IMR-90 (cell line): ENCODE measurements at regions of chr2 and their contacts with region 1.

Region 1: DNA sequence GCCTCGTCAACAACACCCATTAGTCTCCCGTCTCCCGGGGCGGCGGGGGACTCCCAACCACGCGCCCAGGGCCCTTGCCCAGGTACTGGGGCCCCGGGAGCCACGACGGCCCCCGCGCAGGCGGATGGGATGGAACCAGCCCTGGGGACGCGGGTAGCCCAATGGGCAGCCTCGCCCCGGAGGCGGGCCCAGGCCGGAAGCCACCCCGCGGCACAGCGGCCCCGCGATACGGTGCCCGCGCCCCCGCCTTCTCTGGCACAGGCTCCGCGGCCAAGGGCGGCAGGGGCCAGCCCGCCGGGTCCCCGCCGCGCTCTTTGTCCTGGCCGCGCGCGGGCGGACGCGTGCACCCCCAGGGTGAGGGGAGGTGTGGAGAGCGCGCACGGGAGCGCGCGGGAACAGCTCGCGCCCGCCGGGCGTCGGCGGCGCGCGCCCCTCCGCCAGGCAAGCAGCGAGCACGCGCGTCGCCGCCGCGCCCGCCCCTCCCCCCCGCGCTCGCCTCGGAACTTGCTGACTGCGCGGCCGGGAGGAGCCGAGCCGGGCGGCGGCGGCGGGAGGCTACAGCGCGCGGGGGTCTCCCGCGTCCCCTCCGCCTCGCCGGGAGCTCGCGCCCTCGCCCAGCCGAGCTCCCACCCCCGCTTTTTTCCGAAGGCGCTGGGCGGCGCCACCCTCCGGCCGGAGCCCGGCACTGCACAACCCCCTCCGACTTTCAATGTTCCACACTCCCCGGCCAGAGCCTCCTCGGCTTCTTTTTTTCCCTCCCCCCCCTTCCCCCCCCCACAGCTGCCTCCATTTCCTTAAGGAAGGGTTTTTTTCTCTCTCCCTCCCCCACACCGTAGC is at the start of gene UBE2E3:
- DNase-seq: peak; percentile 72
- ATAC-seq: peak; percentile 82
- H3K4me3 ChIP-seq: peak within 1 kb of the TSS; percentile 96
- H3K27ac ChIP-seq: peak within 1 kb of the TSS; percentile 75
- H3K4me1 ChIP-seq: 0 out of 2 replicates have a peak, but pooled peaks cover 7% of the 10 kb centered on the region
- H3K27me3 ChIP-seq: no peaks in the 10 kb centered on the region
- CTCF ChIP-seq: peak; percentile 77
- POLR2A ChIP-seq: peak; percentile 44
- RAD21 ChIP-seq: peak; percentile 67
- total RNA-seq, gene UBE2E3: 92.8 and 106 TPM in 2 replicates

Region 2: DNA sequence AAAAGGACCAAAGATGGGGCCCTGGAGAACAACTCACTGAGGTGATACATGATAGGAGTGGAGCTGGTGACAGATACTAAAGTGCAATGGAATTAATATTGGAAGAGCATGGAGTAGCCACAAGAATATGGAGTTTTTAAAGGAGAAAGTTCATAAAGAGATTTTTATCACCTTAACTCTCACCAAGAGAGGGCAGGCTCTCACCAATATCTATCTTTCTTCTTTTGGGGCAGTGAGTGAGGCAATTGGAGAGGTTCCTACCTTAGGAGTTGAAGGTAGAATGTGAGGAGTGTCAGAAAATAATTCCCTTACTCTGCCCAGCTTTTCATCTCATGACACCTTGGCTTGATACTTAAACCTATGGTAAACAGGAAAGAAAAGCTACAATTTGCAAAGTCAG is 739.5 kb before region 1 on chr2:
- CTCF ChIA-PET with region 1: interaction called, 5 read pairs
- POLR2A ChIA-PET with region 1: interaction called, 3 read pairs
- dilution Hi-C with region 1: no loop called
- in situ Hi-C with region 1: no loop called
- intact Hi-C with region 1: loop called (anchors 1 kb)
- DNase-seq: peak; percentile 22
- ATAC-seq: peak; percentile 54
- H3K4me3 ChIP-seq: no peak overlapping the region
- H3K27ac ChIP-seq: no peak overlapping the region
- H3K4me1 ChIP-seq: no peaks in the 10 kb centered on the region
- H3K27me3 ChIP-seq: no peaks in the 10 kb centered on the region
- CTCF ChIP-seq: peak; percentile 48
- POLR2A ChIP-seq: no peak
- RAD21 ChIP-seq: peak; percentile 55

Region 3: DNA sequence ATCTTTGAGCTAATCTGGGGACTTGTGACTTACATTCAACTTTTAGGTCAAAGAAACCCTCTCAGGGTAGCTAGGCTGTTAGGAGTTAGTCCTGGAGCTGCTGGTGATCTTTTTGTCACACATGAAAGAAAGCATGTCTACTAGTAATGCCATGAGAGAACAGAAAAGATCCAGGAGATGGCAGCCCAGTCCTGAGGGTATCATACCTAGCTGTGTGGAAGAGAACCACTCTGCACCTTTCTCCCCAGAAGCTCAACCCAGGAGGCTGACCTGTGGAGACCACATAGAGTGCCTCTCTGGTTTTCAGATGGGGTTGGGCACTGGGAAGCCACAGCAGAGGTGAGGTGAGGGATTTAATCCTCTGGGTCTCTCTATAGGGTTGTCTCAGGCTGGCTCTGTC is 460.1 kb before region 1 on chr2:
- CTCF ChIA-PET with region 1: no interaction called
- POLR2A ChIA-PET with region 1: no interaction called
- dilution Hi-C with region 1: no loop called
- in situ Hi-C with region 1: no loop called
- intact Hi-C with region 1: loop called (anchors 2 kb)
- DNase-seq: peak; percentile 18
- ATAC-seq: no peak
- H3K4me3 ChIP-seq: no peak overlapping the region
- H3K27ac ChIP-seq: no peak overlapping the region
- H3K4me1 ChIP-seq: peaks cover 8% of the 10 kb centered on the region
- H3K27me3 ChIP-seq: no peaks in the 10 kb centered on the region
- CTCF ChIP-seq: 0 out of 2 replicates have a peak, but pooled peaks have one; percentile 16
- POLR2A ChIP-seq: no peak
- RAD21 ChIP-seq: peak; percentile 37

Region 4: GRCh38 chr2:180823546-180824141 is 156.7 kb before region 1 on chr2:
- CTCF ChIA-PET with region 1: no interaction called
- POLR2A ChIA-PET with region 1: no interaction called
- dilution Hi-C with region 1: no loop called
- in situ Hi-C with region 1: no loop called
- intact Hi-C with region 1: no loop called
- DNase-seq: peak; percentile 57
- ATAC-seq: peak; percentile 46
- H3K4me3 ChIP-seq: no peak overlapping the region
- H3K27ac ChIP-seq: no peak overlapping the region
- H3K4me1 ChIP-seq: no peaks in the 10 kb centered on the region
- H3K27me3 ChIP-seq: no peaks in the 10 kb centered on the region
- CTCF ChIP-seq: no peak
- POLR2A ChIP-seq: no peak
- RAD21 ChIP-seq: no peak

Region 5: DNA sequence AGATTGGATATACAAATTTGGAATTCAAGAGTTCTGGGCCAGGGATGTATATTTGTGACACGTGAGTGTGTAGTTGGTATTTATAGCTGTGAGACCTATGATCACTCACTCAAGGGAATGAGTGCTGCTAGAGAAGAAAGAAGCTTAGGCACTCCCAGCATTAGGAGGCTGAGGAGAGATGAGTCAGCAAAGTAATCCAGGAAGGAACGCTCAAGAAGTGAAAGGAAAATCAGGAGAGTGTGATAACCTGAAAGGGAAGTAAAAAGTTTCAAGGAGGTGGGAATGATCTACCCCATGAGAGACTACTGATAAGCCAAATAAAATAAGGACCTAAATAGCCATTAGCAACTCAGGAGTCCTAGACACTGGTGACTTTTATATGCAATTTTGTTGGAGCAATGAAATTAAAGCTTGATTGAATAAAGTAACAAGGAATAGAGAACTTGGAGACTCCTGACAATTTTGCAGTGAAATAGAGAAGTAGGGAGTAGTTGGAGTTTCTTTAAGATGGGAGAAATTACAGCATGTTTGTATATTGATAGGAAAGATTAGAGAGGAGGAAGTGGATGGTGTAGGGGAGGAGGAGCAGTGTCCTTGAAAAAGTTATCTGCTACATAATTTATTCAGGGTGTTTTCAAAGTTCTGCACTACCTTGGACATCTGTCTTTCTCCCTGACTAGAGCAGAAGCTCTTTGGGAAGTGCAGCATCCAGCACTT is 90.0 kb after region 1 on chr2:
- CTCF ChIA-PET with region 1: no interaction called
- POLR2A ChIA-PET with region 1: no interaction called
- dilution Hi-C with region 1: no loop called
- in situ Hi-C with region 1: no loop called
- intact Hi-C with region 1: loop called (anchors 5 kb)
- DNase-seq: peak; percentile 76
- ATAC-seq: peak; percentile 55
- H3K4me3 ChIP-seq: no peak overlapping the region
- H3K27ac ChIP-seq: no peak overlapping the region
- H3K4me1 ChIP-seq: peaks cover 3% of the 10 kb centered on the region
- H3K27me3 ChIP-seq: no peaks in the 10 kb centered on the region
- CTCF ChIP-seq: no peak
- POLR2A ChIP-seq: no peak
- RAD21 ChIP-seq: no peak

Region 6: DNA sequence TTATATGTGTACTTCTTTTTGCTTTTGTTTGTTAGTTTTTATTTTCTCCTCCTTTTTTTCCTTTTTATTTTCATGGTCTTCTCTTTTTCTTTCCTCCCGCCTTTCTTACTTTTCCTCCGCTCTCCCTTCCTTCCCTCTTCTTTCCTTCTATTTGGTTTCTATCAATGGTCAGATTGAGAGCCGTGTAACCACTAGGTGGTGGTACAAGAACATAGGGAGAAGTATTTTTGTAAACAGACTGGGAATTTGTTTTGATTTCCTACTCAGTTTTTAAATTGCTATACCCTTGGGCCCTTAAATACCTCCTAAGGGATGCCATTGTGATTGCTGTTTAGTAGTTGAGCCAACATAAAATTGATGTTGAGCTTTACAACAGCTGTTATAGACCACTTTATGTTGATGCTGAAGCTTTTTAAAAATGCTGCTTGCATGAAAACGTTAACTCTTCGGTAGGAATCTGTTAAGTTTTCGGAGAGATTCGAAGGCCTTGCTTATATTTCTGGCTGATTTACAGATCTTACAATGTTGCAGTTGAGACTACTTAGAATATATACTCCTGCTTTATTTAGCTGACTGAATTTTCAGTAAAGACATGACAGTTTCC is 124.3 kb after region 1 on chr2:
- CTCF ChIA-PET with region 1: no interaction called
- POLR2A ChIA-PET with region 1: no interaction called
- dilution Hi-C with region 1: no loop called
- in situ Hi-C with region 1: no loop called
- intact Hi-C with region 1: no loop called
- DNase-seq: peak; percentile 76
- ATAC-seq: peak; percentile 50
- H3K4me3 ChIP-seq: no peak overlapping the region
- H3K27ac ChIP-seq: no peak overlapping the region
- H3K4me1 ChIP-seq: peaks cover 5% of the 10 kb centered on the region
- H3K27me3 ChIP-seq: no peaks in the 10 kb centered on the region
- CTCF ChIP-seq: peak; percentile 90
- POLR2A ChIP-seq: no peak
- RAD21 ChIP-seq: peak; percentile 86

Region 7: DNA sequence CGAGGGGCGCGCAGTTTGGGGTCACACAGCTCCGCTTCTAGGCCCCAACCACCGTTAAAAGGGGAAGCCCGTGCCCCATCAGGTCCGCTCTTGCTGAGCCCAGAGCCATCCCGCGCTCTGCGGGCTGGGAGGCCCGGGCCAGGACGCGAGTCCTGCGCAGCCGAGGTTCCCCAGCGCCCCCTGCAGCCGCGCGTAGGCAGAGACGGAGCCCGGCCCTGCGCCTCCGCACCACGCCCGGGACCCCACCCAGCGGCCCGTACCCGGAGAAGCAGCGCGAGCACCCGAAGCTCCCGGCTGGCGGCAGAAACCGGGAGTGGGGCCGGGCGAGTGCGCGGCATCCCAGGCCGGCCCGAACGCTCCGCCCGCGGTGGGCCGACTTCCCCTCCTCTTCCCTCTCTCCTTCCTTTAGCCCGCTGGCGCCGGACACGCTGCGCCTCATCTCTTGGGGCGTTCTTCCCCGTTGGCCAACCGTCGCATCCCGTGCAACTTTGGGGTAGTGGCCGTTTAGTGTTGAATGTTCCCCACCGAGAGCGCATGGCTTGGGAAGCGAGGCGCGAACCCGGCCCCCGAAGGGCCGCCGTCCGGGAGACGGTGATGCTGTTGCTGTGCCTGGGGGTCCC is 476.9 kb after region 1 on chr2 and contains the start of gene ITGA4:
- CTCF ChIA-PET with region 1: no interaction called
- POLR2A ChIA-PET with region 1: no interaction called
- dilution Hi-C with region 1: no loop called
- in situ Hi-C with region 1: no loop called
- intact Hi-C with region 1: loop called (anchors 5 kb)
- DNase-seq: peak; percentile 65
- ATAC-seq: peak; percentile 97
- H3K4me3 ChIP-seq: peak within 1 kb of the TSS; percentile 75
- H3K27ac ChIP-seq: peak within 1 kb of the TSS; percentile 60; the same call in 1 of the 2 replicates
- H3K4me1 ChIP-seq: 0 out of 2 replicates have a peak, but pooled peaks cover 2% of the 10 kb centered on the region
- H3K27me3 ChIP-seq: no peaks in the 10 kb centered on the region; the same call in 1 of the 2 replicates
- CTCF ChIP-seq: peak; percentile 77
- POLR2A ChIP-seq: no peak
- RAD21 ChIP-seq: peak; percentile 67
- total RNA-seq, gene ITGA4: 13.6 and 20.6 TPM in 2 replicates

Region 8: DNA sequence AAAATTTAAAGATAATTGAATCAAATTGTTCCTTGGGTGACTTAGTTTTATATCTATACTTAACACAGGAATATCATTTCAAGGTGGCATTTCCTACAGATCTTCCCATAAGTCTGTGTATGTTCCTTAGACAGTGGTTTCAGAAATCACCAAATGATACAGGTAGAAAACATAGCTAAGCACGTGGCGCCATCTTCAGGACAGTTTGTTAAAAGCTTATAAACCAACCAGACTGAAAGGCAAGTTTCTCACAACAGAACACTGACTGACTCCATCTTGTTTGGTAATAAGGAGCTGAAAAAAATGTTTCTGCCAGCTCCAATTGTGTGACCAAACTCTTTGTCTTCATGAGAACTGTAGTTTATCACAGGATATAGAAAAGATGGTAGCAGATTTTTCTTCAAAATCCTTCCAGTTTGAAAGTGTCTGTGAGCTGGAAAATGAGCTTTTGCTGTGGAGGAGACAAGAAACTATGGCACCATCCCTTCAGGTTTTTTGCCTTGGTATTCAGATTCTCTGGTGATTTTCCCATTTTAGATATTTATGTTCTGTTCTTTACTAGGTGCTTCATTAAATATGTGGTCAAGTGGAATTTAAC is 734.8 kb after region 1 on chr2:
- CTCF ChIA-PET with region 1: no interaction called
- POLR2A ChIA-PET with region 1: no interaction called
- dilution Hi-C with region 1: no loop called
- in situ Hi-C with region 1: no loop called
- intact Hi-C with region 1: loop called (anchors 5 kb)
- DNase-seq: peak; percentile 82
- ATAC-seq: peak; percentile 92
- H3K4me3 ChIP-seq: no peak overlapping the region
- H3K27ac ChIP-seq: no peak overlapping the region
- H3K4me1 ChIP-seq: no peaks in the 10 kb centered on the region
- H3K27me3 ChIP-seq: no peaks in the 10 kb centered on the region; the same call in none of the 2 replicates
- CTCF ChIP-seq: peak; percentile 79
- POLR2A ChIP-seq: no peak
- RAD21 ChIP-seq: peak; percentile 90